Mammary epithelial cell (primary cell): ENCODE measurements at regions of chr5 and their contacts with region 1.

Region 1: GRCh38 chr5:98872674-98873073 is 56.1 kb downstream of the CHD1 start:
- DNase-seq: peak; percentile 24
- H3K4me3 ChIP-seq: no peak overlapping the region
- H3K27ac ChIP-seq: no peak overlapping the region
- H3K4me1 ChIP-seq: no peaks in the 10 kb centered on the region
- H3K27me3 ChIP-seq: no peaks in the 10 kb centered on the region
- CTCF ChIP-seq: no peak

Region 2: GRCh38 chr5:98700730-98701129 is 171.9 kb before region 1 on chr5:
- CTCF ChIA-PET with region 1: no interaction called
- dilution Hi-C with region 1: no loop called
- in situ Hi-C with region 1: no loop called
- intact Hi-C with region 1: no loop called
- DNase-seq: peak; percentile 11
- H3K4me3 ChIP-seq: no peak overlapping the region
- H3K27ac ChIP-seq: no peak overlapping the region
- H3K4me1 ChIP-seq: no peaks in the 10 kb centered on the region
- H3K27me3 ChIP-seq: no peaks in the 10 kb centered on the region
- CTCF ChIP-seq: no peak

Region 3: DNA sequence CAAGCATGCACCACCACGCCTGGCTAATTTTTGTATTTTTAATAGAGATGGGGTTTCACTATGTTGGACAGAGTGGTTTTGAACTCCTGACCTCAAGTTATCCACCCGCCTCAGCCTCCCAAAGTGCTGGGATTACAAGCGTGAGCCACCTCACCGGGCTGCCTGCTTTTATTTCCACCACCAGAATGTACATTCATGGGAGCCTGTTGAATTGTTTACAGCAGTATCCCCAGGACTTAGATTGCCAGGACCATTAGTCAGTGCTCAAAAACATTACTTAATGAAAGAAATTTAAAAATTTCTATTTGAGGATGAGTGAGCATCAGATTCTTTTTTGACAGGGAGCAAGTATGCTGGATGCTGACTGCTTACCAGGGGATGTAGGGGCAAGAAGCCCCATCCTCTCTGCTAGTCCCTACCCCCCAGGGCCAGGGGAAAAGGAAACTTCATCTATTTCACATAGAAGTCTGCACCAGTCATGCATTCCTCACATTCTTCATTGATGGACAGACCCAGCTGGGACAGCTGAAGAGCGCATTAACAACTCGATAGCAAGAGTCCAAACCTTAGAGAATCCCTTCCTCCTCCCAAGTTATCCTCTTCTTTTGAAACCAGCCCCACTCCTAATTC is 109.6 kb before region 1 on chr5:
- CTCF ChIA-PET with region 1: interaction called, 15 read pairs
- dilution Hi-C with region 1: no loop called
- in situ Hi-C with region 1: no loop called
- intact Hi-C with region 1: no loop called
- DNase-seq: no peak
- H3K4me3 ChIP-seq: no peak overlapping the region
- H3K27ac ChIP-seq: no peak overlapping the region
- H3K4me1 ChIP-seq: no peaks in the 10 kb centered on the region
- H3K27me3 ChIP-seq: no peaks in the 10 kb centered on the region
- CTCF ChIP-seq: no peak

Region 4: GRCh38 chr5:99285606-99286005 is 412.9 kb after region 1 on chr5:
- CTCF ChIA-PET with region 1: no interaction called
- dilution Hi-C with region 1: no loop called
- in situ Hi-C with region 1: no loop called
- intact Hi-C with region 1: no loop called
- DNase-seq: no peak
- H3K4me3 ChIP-seq: no peak overlapping the region
- H3K27ac ChIP-seq: no peak overlapping the region
- H3K4me1 ChIP-seq: no peaks in the 10 kb centered on the region
- H3K27me3 ChIP-seq: no peaks in the 10 kb centered on the region
- CTCF ChIP-seq: no peak